Head of caudate nucleus (tissue), 42 donors: ENCODE measurements at regions of chr5 and their contacts with region 1.

Region 1: GRCh38 chr5:37774912-37775483 is 64.8 kb downstream of the GDNF start:
- DNase-seq: no peak

Region 2: DNA sequence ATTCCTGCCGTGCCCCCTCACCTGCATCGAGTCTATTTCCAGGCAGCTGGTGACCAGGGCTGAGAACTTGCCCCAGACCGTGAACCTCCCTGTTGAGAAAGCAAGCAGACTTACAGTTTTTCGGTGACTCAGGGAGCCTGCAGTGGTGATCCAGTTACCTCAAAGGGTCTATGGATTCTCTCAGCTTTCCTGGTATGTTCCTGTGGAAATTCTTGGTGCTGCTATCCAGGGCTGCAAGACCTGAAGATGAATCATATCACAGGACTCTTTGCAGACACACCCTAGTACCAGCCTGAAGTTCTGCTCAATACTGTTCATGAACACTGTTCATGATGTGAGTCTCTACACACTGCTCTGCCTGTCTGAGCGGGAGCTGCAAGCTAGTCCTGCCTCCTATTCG is 241.1 kb before region 1 on chr5:
- intact Hi-C with region 1: no loop called
- DNase-seq: no peak

Region 3: GRCh38 chr5:37814699-37815098 is 39.7 kb after region 1 on chr5:
- intact Hi-C with region 1: loop called (anchors 5 kb)
- DNase-seq: no peak